ENCODE measurements at regions of chr18 and their contacts with region 1.

Region 1: GRCh38 chr18:38237796-38238195 is 672.2 kb upstream of the CELF4 start:
- DNase-seq: no peak
- H3K4me3 ChIP-seq: no peak overlapping the region
- H3K27ac ChIP-seq: no peak overlapping the region
- H3K4me1 ChIP-seq: no peaks in the 10 kb centered on the region
- H3K27me3 ChIP-seq: no peaks in the 10 kb centered on the region
- CTCF ChIP-seq: no peak
- POLR2A ChIP-seq: no peak

Region 2: DNA sequence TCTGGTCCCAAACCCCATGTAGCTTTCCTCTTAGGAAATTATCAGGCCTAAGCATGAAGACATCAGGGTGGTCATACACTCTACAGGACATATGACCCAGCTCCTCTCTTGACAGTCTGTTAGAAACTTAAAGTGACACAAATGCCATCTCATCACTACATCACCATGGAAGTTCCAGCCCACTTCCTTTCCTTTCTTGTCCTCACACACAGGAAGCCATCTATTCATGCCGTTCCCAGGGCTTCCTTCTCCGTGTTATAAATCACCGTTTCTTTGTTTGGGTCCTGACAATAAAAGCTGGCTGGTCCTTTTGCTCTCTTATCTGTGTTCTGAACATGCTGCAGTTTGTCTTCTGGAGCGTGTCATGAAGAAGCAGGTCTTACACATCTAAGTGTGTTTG is 19.8 kb after region 1 on chr18:
- intact Hi-C with region 1: loop called (anchors 2 kb)
- DNase-seq: no peak
- H3K4me3 ChIP-seq: no peak overlapping the region
- H3K27ac ChIP-seq: no peak overlapping the region
- H3K4me1 ChIP-seq: no peaks in the 10 kb centered on the region
- H3K27me3 ChIP-seq: no peaks in the 10 kb centered on the region
- CTCF ChIP-seq: no peak
- POLR2A ChIP-seq: no peak

Measured in vagina (tissue), 2 donors.